Adrenal gland (tissue), 19 donors: ENCODE measurements at regions of chr7 and their contacts with region 1.

Region 1: DNA sequence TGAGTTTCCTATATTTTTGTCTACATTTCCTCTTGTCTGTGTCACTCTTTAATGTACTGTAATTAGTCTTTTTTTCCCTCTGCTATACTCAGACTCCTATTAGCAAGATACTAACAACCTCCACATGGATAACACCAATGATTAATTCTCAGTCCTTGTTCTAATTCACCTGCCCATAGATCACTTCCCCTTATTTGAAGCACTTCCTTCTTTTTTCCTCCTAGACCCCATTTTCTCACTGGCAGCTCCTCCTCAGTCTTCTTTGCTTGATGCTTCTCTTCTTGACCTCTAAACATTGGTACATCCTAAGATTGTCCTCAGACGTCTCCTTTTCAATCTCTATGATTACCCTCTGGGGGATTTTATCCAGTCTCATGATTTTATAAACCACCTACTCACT is 98.2 kb upstream of the IMMP2L start:
- DNase-seq: no peak
- H3K4me3 ChIP-seq: no peak overlapping the region
- H3K27ac ChIP-seq: no peak overlapping the region
- H3K4me1 ChIP-seq: no peaks in the 10 kb centered on the region
- H3K27me3 ChIP-seq: no peaks in the 10 kb centered on the region
- CTCF ChIP-seq: no peak
- POLR2A ChIP-seq: no peak

Region 2: GRCh38 chr7:111588065-111588433 is 72.4 kb before region 1 on chr7:
- intact Hi-C with region 1: no loop called
- DNase-seq: no peak
- H3K4me3 ChIP-seq: no peak overlapping the region
- H3K27ac ChIP-seq: no peak overlapping the region
- H3K4me1 ChIP-seq: no peaks in the 10 kb centered on the region
- H3K27me3 ChIP-seq: no peaks in the 10 kb centered on the region
- CTCF ChIP-seq: no peak
- POLR2A ChIP-seq: no peak

Region 3: GRCh38 chr7:111605246-111605645 is 55.2 kb before region 1 on chr7:
- intact Hi-C with region 1: loop called in 1 of 2 experiments (anchors 10 kb)
- DNase-seq: no peak
- H3K4me3 ChIP-seq: no peak overlapping the region
- H3K27ac ChIP-seq: no peak overlapping the region
- H3K4me1 ChIP-seq: no peaks in the 10 kb centered on the region
- H3K27me3 ChIP-seq: no peaks in the 10 kb centered on the region
- CTCF ChIP-seq: no peak
- POLR2A ChIP-seq: no peak

Region 4: DNA sequence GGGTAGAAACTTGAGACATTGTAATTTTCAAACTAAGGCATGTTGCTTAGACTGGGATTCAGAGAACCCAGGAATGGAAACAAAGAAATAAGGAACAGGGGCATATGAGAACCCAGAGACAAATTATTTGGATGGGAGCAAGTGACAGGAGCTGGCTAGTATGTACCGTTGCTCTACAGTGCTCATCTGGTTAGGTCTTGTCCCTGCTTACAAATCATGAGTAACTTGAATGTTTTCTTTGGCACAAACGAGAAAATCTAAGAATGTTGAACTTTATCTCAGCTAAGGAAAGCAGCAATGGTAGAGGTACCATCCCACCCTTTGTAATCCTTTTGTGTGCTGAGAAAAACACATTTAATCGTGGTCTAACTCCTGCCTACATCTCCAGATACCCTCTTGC is 17.8 kb after region 1 on chr7:
- intact Hi-C with region 1: no loop called
- DNase-seq: no peak
- H3K4me3 ChIP-seq: no peak overlapping the region
- H3K27ac ChIP-seq: no peak overlapping the region
- H3K4me1 ChIP-seq: no peaks in the 10 kb centered on the region
- H3K27me3 ChIP-seq: no peaks in the 10 kb centered on the region
- CTCF ChIP-seq: no peak
- POLR2A ChIP-seq: no peak